AG04450 (cell line): ENCODE measurements at regions of chr3 and their contacts with region 1.

Region 1: DNA sequence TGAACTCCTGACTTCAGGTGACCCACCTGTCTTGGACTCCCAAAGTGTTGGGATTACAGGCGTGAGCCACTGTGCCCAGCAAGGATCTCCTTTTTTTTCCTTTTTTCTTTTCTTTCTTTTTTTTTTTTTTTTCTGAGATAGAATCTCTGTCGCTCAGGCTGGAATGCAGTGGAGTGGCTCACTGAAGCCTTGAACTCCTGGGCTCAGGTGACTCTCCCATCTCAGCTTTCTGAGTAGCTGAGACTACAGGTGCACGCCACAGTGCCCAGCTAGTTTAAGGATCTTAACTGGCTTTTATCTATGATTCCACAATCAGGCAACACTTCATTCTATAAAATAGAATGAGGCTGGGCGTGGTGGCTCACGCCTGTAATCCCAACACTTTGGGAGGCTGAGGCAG is 16.3 kb upstream of the NICN1 start:
- DNase-seq: no peak
- H3K4me3 ChIP-seq: no peak overlapping the region
- H3K27ac ChIP-seq: no peak overlapping the region
- H3K27me3 ChIP-seq: no peaks in the 10 kb centered on the region
- CTCF ChIP-seq: no peak

Region 2: DNA sequence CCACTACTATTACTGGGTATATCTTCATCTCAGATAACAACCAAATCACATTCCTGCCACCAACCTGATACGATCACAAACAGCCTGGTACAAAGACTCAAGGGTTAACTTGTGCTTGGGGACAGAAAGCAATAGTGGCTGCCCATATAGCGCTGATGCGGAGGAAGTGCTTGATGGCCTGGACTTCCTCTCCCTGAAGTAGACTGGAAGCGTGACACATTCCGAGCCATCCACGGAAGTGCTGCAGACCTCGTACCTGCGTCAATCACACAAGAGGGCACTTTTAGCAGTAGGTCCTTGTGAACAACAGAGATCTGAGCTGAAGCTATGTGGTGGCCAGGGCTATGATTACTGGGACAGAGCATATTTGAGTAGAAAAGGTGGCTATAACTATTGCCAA is 151.0 kb before region 1 on chr3:
- CTCF ChIA-PET with region 1: interaction called, 13 read pairs
- POLR2A ChIA-PET with region 1: no interaction called
- DNase-seq: no peak
- H3K4me3 ChIP-seq: no peak overlapping the region
- H3K27ac ChIP-seq: no peak overlapping the region
- H3K27me3 ChIP-seq: no peaks in the 10 kb centered on the region
- CTCF ChIP-seq: no peak

Region 3: DNA sequence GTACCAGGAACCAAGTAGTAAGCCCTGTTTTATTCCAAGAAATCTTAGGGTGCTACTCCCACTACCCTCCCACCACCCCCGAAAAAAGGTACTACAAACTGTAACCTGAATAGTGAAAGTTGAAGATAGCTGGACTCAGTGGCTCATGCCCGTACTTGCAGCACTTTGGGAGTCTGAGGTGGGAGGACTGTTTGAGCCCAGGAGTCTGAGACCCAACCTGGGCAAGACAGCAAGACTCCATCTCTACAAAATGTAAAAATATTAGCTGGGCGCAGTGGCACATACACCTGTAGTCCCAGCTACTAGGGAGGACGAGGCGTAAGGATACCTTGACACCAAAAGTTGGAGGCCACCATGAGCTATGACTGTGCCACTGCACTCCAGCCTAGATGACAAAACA is 41.5 kb before region 1 on chr3:
- CTCF ChIA-PET with region 1: interaction called, 10 read pairs
- POLR2A ChIA-PET with region 1: no interaction called
- DNase-seq: no peak
- H3K4me3 ChIP-seq: no peak overlapping the region
- H3K27ac ChIP-seq: peak overlapping the region; percentile 31
- H3K27me3 ChIP-seq: no peaks in the 10 kb centered on the region
- CTCF ChIP-seq: no peak